Uterus (tissue), 4 donors: ENCODE measurements at regions of chr17 and their contacts with region 1.

Region 1: GRCh38 chr17:1573916-1574696 is 11.5 kb upstream of the PITPNA start:
- DNase-seq: peak; percentile 81 to 84
- H3K4me3 ChIP-seq: no peak overlapping the region
- H3K27ac ChIP-seq: peak overlapping the region; percentile 71 to 73
- H3K4me1 ChIP-seq: peaks cover 0 to 18% of the 10 kb centered on the region in 2 donors
- H3K27me3 ChIP-seq: no peaks in the 10 kb centered on the region
- CTCF ChIP-seq: peak; percentile 94 to 98 (median 98)
- POLR2A ChIP-seq: no peak

Region 2: DNA sequence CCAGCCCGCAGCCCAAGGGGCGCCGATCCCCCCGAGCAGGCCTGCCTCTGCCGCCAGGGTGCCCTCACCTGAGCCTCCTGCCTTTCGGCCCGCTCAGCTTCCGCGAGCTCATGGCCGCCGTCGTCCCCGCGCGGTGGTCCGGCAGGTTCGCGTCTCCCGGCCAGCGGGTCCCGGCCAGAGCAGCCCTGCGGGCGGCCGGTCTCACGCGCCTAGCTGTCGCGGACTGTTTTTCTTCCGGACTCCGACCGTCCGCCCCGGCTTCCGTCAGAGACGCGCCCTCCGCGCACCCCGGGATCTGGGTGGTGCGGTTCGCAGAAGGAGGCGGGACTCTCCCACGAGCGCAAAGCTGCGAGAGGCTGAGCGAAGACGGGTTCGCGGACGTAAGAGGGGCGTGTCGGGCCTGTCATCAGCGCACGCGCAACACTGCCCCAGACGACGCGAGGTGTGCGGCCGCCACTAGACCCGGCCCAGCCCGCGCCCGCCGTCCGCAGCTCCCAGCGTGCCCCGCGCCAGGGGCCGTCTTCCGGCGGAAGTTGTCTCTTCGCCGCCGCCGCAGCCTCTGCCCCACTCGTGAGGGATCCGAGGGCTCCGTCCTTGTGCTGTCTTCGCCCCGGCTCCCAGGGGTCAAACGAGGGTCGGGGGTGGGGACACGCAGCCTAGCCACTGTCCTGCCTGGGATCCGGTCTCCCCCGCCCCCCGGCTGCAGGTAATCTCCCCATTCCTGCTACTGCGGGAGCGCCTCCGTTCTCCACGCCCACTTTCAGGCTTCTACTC is 57.5 kb before region 1 on chr17 and contains the start of gene INPP5K:
- intact Hi-C with region 1: no loop called
- DNase-seq: peak; percentile 97 to 98
- H3K4me3 ChIP-seq: peak within 1 kb of the TSS; percentile 96 to 98
- H3K27ac ChIP-seq: peak within 1 kb of the TSS; percentile 93
- H3K4me1 ChIP-seq: peaks cover 0 to 6% of the 10 kb centered on the region in 2 donors
- H3K27me3 ChIP-seq: no peaks in the 10 kb centered on the region
- CTCF ChIP-seq: peak in 3 of 4 experiments; percentile 30 to 44 (median 34)
- POLR2A ChIP-seq: peak; percentile 19 to 59
- total RNA-seq, gene INPP5K: 14.1 to 49.3 (median 31.4) TPM

Region 3: GRCh38 chr17:1628856-1629646 is 54.9 kb after region 1 on chr17:
- intact Hi-C with region 1: loop called (anchors 5 kb)
- DNase-seq: peak; percentile 91 to 93
- H3K4me3 ChIP-seq: peak overlapping the region; percentile 62 to 77
- H3K27ac ChIP-seq: peak overlapping the region; percentile 85 to 88
- H3K4me1 ChIP-seq: no peaks in the 10 kb centered on the region
- H3K27me3 ChIP-seq: no peaks in the 10 kb centered on the region
- CTCF ChIP-seq: peak; percentile 19 to 59 (median 42)
- POLR2A ChIP-seq: peak; percentile 16 to 48

Region 4: GRCh38 chr17:1639549-1640343 is 65.6 kb after region 1 on chr17:
- intact Hi-C with region 1: loop called (anchors 5 kb)
- DNase-seq: no peak
- H3K4me3 ChIP-seq: no peak overlapping the region
- H3K27ac ChIP-seq: no peak overlapping the region
- H3K4me1 ChIP-seq: peaks cover 0 to 7% of the 10 kb centered on the region in 2 donors
- H3K27me3 ChIP-seq: no peaks in the 10 kb centered on the region
- CTCF ChIP-seq: no peak
- POLR2A ChIP-seq: no peak